Activated T-helper 1 cell treated with anti-CD3 and anti-CD28 coated beads, Interleukin-12 subunit alpha, Interleukin-12 subunit beta, Interleukin-2, Interleukin-4 antibody, amounts not matched to agents 30 ng/mL and 10 ng/mL and 1 ng/mL, durations not matched to agents 14 hours and 24 hours and 36 hours (primary cell): ENCODE measurements at regions of chr1 and their contacts with region 1.

Region 1: DNA sequence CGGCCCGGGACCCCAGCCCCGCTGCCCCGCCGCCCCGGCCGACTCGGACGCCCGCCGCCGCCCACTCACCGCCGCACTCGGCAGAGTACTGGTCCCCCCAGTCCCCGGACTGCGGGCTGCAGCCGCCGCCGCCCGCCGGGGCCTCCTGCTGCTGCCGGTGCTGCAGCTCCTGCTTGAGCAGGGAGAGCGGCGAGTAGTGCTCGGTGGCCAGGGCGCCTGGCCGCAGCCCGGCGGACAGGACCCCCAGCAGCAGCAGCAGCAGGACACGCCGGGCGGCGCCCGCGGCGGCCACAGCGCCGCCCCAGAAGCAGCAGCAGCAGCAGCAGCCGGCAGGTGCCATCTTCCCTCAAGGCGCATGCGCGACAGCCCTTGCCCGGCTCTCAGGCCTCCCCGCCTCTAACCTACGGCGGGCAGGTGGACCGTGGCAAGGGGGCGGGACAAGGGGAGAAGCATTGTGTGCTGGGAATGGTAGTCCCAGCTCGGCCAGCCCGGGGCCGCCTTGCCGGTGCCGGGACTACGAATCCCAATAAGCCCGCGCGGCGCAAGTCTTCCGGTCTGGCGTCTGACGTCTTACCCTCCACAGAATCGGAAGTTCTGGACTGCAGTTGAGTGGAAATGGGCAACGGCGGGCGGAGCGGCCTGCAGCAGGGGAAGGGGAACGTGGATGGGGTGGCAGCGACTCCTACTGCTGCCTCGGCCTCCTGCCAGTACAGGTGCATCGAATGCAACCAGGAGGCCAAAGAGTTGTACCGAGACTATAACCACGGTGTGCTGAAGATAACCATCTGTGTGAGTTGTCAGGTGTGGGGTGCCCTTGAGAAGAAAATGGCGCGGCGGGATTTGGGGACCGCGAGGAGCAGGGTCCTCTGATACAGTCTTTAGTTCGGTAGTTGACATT is at the starts of genes ARV1 and TTC13:
- DNase-seq: peak; percentile 97
- H3K4me3 Mint-ChIP-seq: peak within 1 kb of the TSS; percentile 92
- H3K27ac Mint-ChIP-seq: peak within 1 kb of the TSS; percentile 94
- H3K4me1 Mint-ChIP-seq: peaks cover 33% of the 10 kb centered on the region
- H3K27me3 Mint-ChIP-seq: no peaks in the 10 kb centered on the region
- total RNA-seq, gene ARV1: 14.3 and 14.6 TPM in 2 replicates
- total RNA-seq, gene TTC13: 20.7 and 21.8 TPM in 2 replicates

Region 2: GRCh38 chr1:230867903-230868735 is 110.6 kb before region 1 on chr1 and contains the start of gene C1orf198:
- intact Hi-C with region 1: loop called (anchors 1 kb)
- DNase-seq: peak; percentile 59
- H3K4me3 Mint-ChIP-seq: peak within 1 kb of the TSS; percentile 87
- H3K27ac Mint-ChIP-seq: peak within 1 kb of the TSS; percentile 80
- H3K4me1 Mint-ChIP-seq: peaks cover 28% of the 10 kb centered on the region
- H3K27me3 Mint-ChIP-seq: peaks cover 39% of the 10 kb centered on the region
- total RNA-seq, gene C1orf198: 14.1 and 14.6 TPM in 2 replicates

Region 3: DNA sequence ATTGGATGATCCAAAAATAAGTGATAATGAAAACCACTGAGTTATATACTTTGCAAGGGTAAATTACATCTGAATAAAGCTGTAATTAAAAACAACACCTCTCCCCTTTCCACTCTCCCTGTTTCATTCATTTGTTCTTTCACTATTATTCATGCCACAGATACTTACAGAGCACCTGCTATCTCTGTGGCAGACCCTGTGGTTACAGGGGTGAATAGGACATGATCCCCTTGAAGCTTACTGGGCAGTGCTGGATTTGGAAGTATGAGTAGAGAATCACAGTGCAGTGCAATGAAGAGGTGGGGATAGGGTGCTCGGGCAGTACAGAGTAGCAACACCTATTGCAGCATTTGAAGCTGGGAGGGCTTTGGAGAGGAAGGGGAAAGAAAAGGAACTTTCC is 21.9 kb after region 1 on chr1:
- intact Hi-C with region 1: no loop called
- DNase-seq: no peak
- H3K4me3 Mint-ChIP-seq: no peak overlapping the region
- H3K27ac Mint-ChIP-seq: no peak overlapping the region
- H3K4me1 Mint-ChIP-seq: no peaks in the 10 kb centered on the region
- H3K27me3 Mint-ChIP-seq: no peaks in the 10 kb centered on the region

Region 4: GRCh38 chr1:231040019-231040799 is 61.5 kb after region 1 on chr1 and contains the start of gene FAM89A:
- intact Hi-C with region 1: loop called (anchors 1 kb)
- DNase-seq: peak; percentile 57
- H3K4me3 Mint-ChIP-seq: peak within 1 kb of the TSS; percentile 84
- H3K27ac Mint-ChIP-seq: peak within 1 kb of the TSS; percentile 77
- H3K4me1 Mint-ChIP-seq: peaks cover 35% of the 10 kb centered on the region
- H3K27me3 Mint-ChIP-seq: peaks cover 40% of the 10 kb centered on the region
- total RNA-seq, gene FAM89A: 23.2 and 28.0 TPM in 2 replicates

Region 5: GRCh38 chr1:231272880-231273279 is 294.1 kb after region 1 on chr1:
- intact Hi-C with region 1: loop called (anchors 2 kb)
- DNase-seq: peak; percentile 27
- H3K4me3 Mint-ChIP-seq: peak overlapping the region; percentile 83
- H3K27ac Mint-ChIP-seq: peak overlapping the region; percentile 100
- H3K4me1 Mint-ChIP-seq: peaks cover 39% of the 10 kb centered on the region
- H3K27me3 Mint-ChIP-seq: no peaks in the 10 kb centered on the region

Region 6: DNA sequence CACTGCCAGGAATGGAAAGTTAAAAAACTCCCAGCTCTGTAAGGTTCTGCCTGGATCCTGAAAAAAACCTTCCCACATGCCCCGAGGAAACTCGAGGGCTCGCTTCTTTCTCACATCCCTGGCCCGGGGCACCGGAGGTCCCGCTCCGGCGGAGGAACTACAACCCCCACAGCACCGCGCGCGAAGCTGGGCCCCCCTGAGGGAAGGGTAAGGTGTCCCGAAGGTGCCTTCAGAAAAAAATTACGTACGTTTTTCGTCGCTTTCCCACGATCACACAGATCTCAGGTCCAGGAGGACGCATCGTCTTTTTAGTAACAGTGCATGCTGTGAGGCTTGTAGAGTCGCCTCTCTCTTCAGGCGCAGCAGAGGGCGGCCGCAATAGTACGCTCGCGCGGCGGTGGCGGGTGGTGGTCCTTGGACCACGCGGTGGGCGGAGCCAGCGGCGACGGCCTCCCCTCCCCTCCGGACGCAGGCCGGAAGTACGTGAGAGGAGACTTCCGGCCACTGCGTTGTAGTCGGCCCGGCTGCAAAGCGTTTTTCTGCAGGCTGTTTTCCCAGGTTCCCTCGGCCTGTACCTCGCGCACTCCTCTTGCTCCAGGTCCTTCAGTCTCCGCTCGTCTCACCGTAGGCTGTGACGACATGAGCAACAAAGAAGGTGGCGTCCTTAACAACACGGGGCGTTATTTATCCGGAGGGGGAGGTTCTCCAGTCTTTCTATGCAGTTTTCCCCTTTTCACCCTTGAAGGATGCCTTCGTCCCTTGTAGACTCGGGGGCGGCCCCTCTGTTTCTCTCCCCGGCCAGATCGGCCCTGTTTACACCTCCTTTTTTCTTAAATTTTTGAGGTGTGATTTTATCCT is 549.7 kb after region 1 on chr1 and contains the start of gene TSNAX:
- intact Hi-C with region 1: loop called (anchors 1 kb)
- DNase-seq: peak; percentile 88
- H3K4me3 Mint-ChIP-seq: peak within 1 kb of the TSS; percentile 93
- H3K27ac Mint-ChIP-seq: peak within 1 kb of the TSS; percentile 98
- H3K4me1 Mint-ChIP-seq: peaks cover 38% of the 10 kb centered on the region
- H3K27me3 Mint-ChIP-seq: no peaks in the 10 kb centered on the region
- total RNA-seq, gene TSNAX: 42.7 and 47.1 TPM in 2 replicates